ENCODE measurements at regions of chr9 and their contacts with region 1.

Region 1: DNA sequence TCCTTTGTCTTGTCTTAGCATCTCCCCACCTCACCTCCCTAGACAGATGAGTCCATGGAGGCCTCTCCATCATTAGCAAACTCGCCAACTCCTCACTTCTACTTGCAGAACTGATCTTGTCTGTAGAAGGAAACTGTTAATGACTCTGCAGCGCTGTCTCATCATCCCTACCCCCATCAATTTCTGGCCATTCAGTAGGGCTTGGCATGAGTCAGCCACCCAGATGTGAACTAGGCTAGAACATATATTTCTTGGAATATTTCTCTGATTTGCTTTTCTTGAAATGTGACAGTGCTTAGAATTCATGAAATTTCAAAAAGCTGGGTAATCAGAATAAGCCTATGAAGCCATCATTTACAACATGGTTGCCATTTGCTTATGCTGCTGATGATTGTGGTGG is 1125.0 kb upstream of the DMAC1 start:
- DNase-seq: no peak
- H3K4me3 ChIP-seq: no peak overlapping the region
- H3K27ac ChIP-seq: no peak overlapping the region
- H3K4me1 ChIP-seq: no peaks in the 10 kb centered on the region
- H3K27me3 ChIP-seq: no peaks in the 10 kb centered on the region
- CTCF ChIP-seq: no peak

Region 2: DNA sequence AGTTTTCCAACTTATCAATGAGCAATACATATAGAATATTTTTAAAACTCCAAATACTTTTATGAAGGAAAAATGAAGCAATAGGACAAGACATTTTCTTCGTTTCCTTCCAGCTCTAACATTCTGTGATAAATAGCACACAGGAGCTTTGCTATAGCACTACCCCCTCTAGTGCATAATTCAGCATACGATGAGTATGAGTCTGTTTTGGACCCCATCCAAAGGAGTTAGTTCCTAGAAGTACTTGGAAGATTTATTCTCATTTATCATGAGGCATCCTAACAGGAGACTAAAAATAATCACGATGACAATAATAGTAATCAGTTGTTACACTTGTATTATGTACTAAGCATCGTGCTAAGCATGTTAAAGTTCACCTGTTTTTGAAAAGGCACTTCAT is 63.6 kb before region 1 on chr9:
- CTCF ChIA-PET with region 1: no interaction called
- POLR2A ChIA-PET with region 1: no interaction called
- intact Hi-C with region 1: loop called (anchors 10 kb)
- DNase-seq: peak; percentile 11
- H3K4me3 ChIP-seq: no peak overlapping the region
- H3K27ac ChIP-seq: no peak overlapping the region
- H3K4me1 ChIP-seq: no peaks in the 10 kb centered on the region
- H3K27me3 ChIP-seq: peaks cover 85% of the 10 kb centered on the region
- CTCF ChIP-seq: no peak

Region 3: DNA sequence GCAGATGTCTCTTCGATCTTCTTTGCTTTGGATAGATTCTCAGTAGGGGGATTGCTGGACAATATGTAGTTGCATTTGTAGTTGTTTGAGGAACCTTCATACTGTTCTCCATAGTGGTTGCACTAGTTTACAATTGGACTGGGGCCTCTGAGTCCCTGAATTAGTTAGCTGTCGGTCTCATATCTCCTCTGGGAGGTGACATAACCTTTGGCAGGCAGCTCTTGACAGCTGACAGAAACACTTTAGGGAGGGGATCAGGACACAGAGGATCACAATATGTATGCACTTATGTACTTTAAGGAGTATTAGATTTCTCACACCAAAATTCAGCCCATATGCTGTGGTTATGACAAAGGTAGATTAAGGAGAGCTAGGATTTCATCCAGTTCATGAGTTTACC is 154.9 kb after region 1 on chr9:
- CTCF ChIA-PET with region 1: no interaction called
- POLR2A ChIA-PET with region 1: no interaction called
- intact Hi-C with region 1: no loop called
- DNase-seq: no peak
- H3K4me3 ChIP-seq: no peak overlapping the region
- H3K27ac ChIP-seq: no peak overlapping the region
- H3K4me1 ChIP-seq: no peaks in the 10 kb centered on the region
- H3K27me3 ChIP-seq: no peaks in the 10 kb centered on the region
- CTCF ChIP-seq: no peak

Measured in A673 (cell line).